Heart right ventricle (tissue), 16 donors: ENCODE measurements at regions of chr11 and their contacts with region 1.

Region 1: GRCh38 chr11:7442588-7443215 is 42.6 kb upstream of the OLFML1 start:
- DNase-seq: peak; percentile 67 to 70
- ATAC-seq: peak; percentile 63 to 84 (median 74)
- H3K4me3 ChIP-seq: no peak overlapping the region
- H3K27ac ChIP-seq: no peak overlapping the region
- H3K4me1 ChIP-seq: peaks cover 0 to 16% (median 0%) of the 10 kb centered on the region in 9 donors
- H3K27me3 ChIP-seq: no peaks in the 10 kb centered on the region
- CTCF ChIP-seq: peak; percentile 73 to 92 (median 87)

Region 2: DNA sequence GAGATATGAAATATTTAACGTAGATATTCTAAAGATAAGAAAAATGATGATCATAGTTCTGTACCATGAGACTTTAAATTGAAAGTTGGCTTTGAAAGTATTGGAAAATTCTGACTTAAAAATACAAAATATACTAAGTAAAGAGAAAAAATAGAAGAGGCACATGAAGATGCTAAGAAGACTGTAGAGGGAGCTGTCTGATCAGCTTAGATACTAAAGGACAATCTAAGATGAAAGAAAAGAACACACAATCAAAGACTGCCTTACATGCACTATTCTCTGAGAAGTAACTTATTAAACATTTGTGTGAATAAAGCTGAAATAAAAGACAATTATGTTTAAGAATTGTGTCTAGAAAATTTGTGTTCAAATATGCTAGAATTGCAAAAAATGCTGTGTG is 298.8 kb before region 1 on chr11:
- intact Hi-C with region 1: loop called in 2 of 10 experiments (anchors 5 to 10 kb)
- DNase-seq: no peak
- ATAC-seq: no peak
- H3K4me3 ChIP-seq: no peak overlapping the region
- H3K27ac ChIP-seq: no peak overlapping the region
- H3K4me1 ChIP-seq: no peaks in the 10 kb centered on the region
- H3K27me3 ChIP-seq: no peaks in the 10 kb centered on the region
- CTCF ChIP-seq: peak in 6 of 9 donors; percentile 34 to 53 (median 38)

Region 3: GRCh38 chr11:7353100-7353499 is 89.6 kb before region 1 on chr11:
- intact Hi-C with region 1: loop called in 2 of 10 experiments (anchors 10 kb)
- DNase-seq: peak in 1 of 2 donors; percentile 7
- ATAC-seq: no peak
- H3K4me3 ChIP-seq: no peak overlapping the region
- H3K27ac ChIP-seq: no peak overlapping the region
- H3K4me1 ChIP-seq: no peaks in the 10 kb centered on the region
- H3K27me3 ChIP-seq: no peaks in the 10 kb centered on the region
- CTCF ChIP-seq: peak in 6 of 9 donors; percentile 28 to 50 (median 38)

Region 4: DNA sequence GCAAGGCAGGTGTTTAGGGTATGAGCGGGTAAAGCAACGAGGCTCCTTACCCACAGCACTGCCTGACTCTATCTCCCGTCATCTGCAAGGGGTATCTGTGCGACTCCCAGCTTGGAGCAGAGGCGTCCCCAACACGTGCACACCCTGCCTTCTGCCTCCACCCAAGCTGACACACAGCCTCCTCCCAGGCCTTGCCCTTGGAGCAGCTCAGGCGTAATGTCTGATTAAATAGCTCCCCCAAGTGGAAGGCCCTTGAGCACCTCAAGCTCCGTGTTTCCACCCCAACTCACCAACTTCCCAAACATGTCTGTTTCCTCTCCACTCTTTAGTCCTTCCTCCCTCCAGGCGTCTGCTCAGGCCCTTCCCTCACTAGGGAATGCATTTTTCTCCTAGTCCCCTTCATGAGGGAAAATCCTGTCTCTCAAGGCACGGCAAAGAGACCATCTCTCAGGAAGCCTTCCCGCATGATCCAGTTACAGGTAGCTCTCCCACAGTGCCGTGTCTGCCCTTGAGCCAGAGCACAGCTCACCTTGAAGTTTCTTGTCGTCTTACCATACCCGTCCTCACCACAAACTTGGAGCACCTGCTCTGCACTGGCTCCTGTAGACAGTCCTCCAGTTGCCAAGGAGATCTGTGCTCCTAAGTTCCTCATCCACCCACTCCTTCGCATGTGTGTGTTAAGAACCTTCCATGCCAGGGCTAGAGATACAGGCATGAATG is 214.8 kb after region 1 on chr11:
- intact Hi-C with region 1: loop called in 1 of 10 experiments (anchors 10 kb)
- DNase-seq: peak; percentile 48 to 53
- ATAC-seq: peak; percentile 87 to 95 (median 92)
- H3K4me3 ChIP-seq: no peak overlapping the region
- H3K27ac ChIP-seq: peak overlapping the region in 2 of 10 donors; percentile 71
- H3K4me1 ChIP-seq: peaks cover 0 to 19% (median 12%) of the 10 kb centered on the region in 9 donors
- H3K27me3 ChIP-seq: no peaks in the 10 kb centered on the region
- CTCF ChIP-seq: peak in 8 of 9 donors; percentile 27 to 70 (median 57)